ENCODE measurements at regions of chr5 and their contacts with region 1.

Region 1: GRCh38 chr5:10987930-10988504 is 227.0 kb upstream of the DAP start:
- DNase-seq: peak; percentile 74
- ATAC-seq: peak; percentile 84
- H3K4me3 Mint-ChIP-seq: peak overlapping the region; percentile 17
- H3K27ac Mint-ChIP-seq: no peak overlapping the region
- H3K4me1 Mint-ChIP-seq: peaks cover 9% of the 10 kb centered on the region
- H3K27me3 Mint-ChIP-seq: no peaks in the 10 kb centered on the region

Region 2: DNA sequence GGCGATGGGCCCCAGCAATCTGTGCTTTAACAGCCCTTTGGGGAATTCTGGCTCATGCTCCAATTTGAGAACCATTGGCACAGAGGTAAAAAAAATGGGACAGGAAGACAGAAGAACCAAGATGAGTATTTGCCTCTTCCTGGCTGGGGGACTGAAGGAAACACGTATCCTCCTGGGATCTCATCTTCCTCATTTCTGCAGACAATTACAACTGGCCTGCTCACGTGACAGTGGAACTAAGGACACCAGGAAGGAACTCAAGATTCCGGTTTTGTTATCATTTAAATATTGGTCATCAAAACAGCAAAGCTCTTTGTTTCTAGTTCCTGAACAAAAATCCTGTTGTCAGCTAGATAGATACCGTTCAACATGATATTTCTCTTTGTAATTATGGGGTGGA is 11.0 kb before region 1 on chr5:
- CTCF ChIA-PET with region 1: interaction called, 12 read pairs
- POLR2A ChIA-PET with region 1: no interaction called
- DNase-seq: no peak
- ATAC-seq: no peak
- H3K4me3 Mint-ChIP-seq: no peak overlapping the region
- H3K27ac Mint-ChIP-seq: no peak overlapping the region
- H3K4me1 Mint-ChIP-seq: peaks cover 4% of the 10 kb centered on the region
- H3K27me3 Mint-ChIP-seq: no peaks in the 10 kb centered on the region

Region 3: GRCh38 chr5:11000515-11001353 is 12.7 kb after region 1 on chr5:
- CTCF ChIA-PET with region 1: interaction called, 10 read pairs
- POLR2A ChIA-PET with region 1: no interaction called
- DNase-seq: no peak
- ATAC-seq: no peak
- H3K4me3 Mint-ChIP-seq: no peak overlapping the region
- H3K27ac Mint-ChIP-seq: no peak overlapping the region
- H3K4me1 Mint-ChIP-seq: no peaks in the 10 kb centered on the region
- H3K27me3 Mint-ChIP-seq: peaks cover 5% of the 10 kb centered on the region

Region 4: DNA sequence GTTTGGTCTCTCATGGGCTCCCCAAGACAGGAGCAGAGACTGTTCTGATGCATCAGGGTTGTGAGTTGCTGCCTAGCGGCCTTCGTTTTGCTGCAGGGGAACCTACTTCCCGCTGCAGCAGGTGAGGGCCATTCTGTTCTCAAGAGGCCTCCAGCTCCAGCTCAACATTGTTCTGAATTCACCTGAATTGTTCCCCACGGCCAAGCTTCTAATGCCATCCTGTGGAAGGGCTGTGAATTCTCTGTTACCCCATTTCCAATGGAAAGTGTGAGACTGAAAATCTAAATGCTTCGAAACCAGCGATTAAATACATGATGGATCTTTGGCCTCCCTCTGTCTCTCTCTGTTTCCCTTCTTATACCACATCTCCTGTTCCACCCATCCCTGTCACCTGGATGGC is 122.1 kb after region 1 on chr5:
- CTCF ChIA-PET with region 1: no interaction called
- POLR2A ChIA-PET with region 1: no interaction called
- DNase-seq: no peak
- ATAC-seq: no peak
- H3K4me3 Mint-ChIP-seq: no peak overlapping the region
- H3K27ac Mint-ChIP-seq: no peak overlapping the region
- H3K4me1 Mint-ChIP-seq: no peaks in the 10 kb centered on the region
- H3K27me3 Mint-ChIP-seq: no peaks in the 10 kb centered on the region

Measured in activated CD8-positive, alpha-beta T cell treated with anti-CD3 and anti-CD28 coated beads, Interleukin-2, amount 10 ng/mL, durations not matched to agents 7 days and 5 days (primary cell).